ENCODE measurements at regions of chr21 and their contacts with region 1.

Region 1: DNA sequence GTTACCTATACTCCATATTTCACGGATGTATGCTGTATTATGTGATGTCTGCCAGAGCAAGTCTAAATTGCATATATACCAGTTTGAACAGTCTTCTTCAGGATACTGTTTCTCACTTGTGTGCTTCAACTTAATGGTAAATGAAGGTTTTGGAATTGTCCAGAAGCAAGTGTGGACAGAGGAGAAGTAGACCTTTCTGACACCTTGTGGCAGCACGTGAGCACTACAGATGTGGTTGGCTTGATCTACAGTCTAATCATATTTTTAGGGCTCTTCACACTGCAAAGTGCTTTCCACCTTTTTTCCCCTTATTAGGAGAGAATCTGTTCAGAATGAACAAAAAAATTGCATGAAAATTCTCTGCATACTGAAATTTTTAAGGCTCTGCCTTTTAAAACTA is 10.9 kb downstream of the MORC3 start:
- DNase-seq: peak; percentile 62
- ATAC-seq: peak; percentile 86
- H3K4me3 ChIP-seq: no peak overlapping the region
- H3K27ac ChIP-seq: no peak overlapping the region
- H3K4me1 ChIP-seq: peaks cover 2% of the 10 kb centered on the region; the same call in 1 of the 2 replicates
- H3K27me3 ChIP-seq: no peaks in the 10 kb centered on the region
- CTCF ChIP-seq: peak; percentile 80

Region 2: GRCh38 chr21:36260030-36260787 is 70.7 kb before region 1 on chr21:
- CTCF ChIA-PET with region 1: no interaction called
- POLR2A ChIA-PET with region 1: no interaction called
- intact Hi-C with region 1: loop called (anchors 2 kb)
- DNase-seq: peak; percentile 86
- ATAC-seq: peak; percentile 91
- H3K4me3 ChIP-seq: peak overlapping the region; percentile 65
- H3K27ac ChIP-seq: no peak overlapping the region
- H3K4me1 ChIP-seq: no peaks in the 10 kb centered on the region; the same call in 1 of the 2 replicates
- H3K27me3 ChIP-seq: no peaks in the 10 kb centered on the region
- CTCF ChIP-seq: peak; percentile 91